ENCODE measurements at regions of chr9 and their contacts with region 1.

Region 1: DNA sequence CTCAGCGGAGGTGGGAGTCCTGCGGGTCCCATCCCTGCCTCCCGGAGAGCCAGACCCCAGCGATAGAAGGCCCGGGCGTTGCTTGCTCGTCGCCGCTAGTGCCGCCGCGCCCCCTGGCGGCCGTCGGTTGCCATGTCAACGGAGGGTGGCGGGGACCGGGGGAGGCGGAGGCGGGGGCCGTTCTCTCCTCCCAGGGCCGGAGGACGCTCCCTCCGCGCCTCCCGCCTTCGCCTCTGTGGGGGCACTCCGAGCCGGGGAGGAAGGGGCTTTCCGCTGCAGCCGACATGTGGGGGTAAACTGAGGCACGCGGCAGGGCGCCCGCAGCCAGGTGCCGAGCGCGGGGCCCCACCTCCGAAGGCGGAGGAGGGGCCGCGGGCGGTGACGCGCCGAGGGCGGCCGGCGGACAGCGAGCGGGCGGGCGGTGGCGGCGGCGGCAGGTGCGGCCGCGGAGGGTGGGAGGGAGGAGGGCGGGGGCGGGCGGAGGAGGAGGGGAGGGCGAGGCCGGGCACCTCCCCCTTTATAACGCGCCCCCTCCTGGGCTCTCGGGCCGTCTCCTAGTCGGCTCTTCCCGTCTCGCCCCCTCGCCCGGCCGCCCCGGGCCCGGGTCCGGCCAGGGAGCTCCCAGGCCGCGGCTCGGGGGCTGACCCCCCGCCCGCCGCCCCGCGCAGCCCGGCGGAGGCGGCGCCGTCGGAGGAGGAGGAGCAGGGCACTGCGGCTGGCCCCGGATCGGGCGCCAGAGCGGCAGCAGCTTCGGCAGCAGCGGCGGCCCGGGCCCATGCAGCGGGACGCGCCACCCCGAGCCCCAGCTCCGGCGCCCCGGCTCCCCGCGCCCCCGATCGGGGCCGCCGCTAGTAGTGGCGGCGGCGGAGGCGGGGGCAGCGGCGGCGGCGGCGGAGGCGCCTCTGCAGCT is 556 bp upstream of the CDK9 start:
- DNase-seq: no peak
- H3K4me3 ChIP-seq: peak overlapping the region; percentile 88
- CTCF ChIP-seq: peak; percentile 87

Region 2: DNA sequence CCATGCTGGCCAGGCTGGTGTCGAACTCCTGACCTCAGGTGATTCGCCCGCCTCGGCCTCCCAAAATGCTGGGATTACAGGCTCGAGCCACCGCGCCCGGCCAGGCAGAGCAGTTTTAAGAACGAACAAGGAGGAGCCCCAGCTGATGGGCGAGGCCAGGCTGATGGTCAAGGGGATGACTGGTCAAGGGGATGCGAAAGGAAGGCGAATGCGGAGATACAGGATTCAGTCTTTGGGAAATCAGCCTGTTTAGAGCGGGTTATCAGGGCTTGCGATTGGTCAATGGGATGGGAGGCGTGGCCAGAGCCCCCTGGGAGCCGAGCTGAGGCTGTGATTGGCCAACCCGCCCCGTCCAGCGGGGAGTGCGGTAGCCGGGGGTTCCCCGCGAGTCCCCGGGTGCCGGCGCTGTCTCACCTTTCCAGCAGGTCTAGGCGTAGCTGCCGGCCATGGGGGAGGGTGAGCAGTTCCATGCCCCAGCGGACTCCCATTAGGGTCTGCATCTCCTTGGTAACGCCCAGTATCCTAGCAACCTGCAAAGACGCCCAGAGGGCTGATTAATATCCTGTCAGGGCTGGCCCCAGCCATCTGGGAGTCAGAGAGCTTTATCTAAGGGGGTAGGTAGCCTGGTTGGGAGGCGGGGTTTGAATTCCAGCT is 42.7 kb before region 1 on chr9:
- CTCF ChIA-PET with region 1: interaction called, 12 read pairs
- POLR2A ChIA-PET with region 1: no interaction called
- DNase-seq: no peak
- H3K4me3 ChIP-seq: peak overlapping the region; percentile 51
- CTCF ChIP-seq: no peak

Region 3: DNA sequence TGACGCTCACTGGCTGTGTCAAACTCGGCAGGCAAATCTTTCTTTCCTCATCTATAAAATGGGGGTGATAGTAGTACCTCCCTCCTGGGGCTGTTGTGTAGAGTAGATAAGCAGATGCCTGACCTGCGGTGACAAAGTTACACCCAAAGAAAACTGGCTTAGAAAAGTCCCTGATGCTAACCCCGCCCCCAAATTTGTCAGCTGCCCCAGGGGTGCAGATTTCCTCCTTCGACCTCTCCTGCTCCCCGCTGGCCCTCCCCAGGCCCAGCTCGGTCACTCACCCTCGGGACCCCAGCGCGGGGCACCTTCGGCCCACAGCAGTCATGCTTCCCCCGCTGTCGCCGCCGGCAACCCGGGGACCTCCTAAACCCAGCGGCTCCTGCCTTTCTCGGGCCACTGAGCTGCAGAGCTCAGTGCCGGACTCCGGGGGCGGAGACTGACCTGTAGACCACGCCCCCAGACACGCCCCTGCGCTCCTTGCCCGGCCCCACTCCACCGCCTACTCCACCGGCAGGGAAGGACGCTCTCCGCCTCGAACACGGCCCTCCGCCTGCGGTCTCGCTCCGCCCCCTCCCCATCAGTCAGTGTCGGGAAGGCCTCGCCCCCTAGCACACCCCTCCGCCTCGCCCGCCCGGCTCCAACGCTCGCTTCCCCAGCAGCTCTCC is 14.2 kb before region 1 on chr9:
- CTCF ChIA-PET with region 1: interaction called, 93 read pairs
- POLR2A ChIA-PET with region 1: interaction called, 4 read pairs
- DNase-seq: peak; percentile 50
- H3K4me3 ChIP-seq: peak overlapping the region; percentile 59
- CTCF ChIP-seq: no peak

Region 4: DNA sequence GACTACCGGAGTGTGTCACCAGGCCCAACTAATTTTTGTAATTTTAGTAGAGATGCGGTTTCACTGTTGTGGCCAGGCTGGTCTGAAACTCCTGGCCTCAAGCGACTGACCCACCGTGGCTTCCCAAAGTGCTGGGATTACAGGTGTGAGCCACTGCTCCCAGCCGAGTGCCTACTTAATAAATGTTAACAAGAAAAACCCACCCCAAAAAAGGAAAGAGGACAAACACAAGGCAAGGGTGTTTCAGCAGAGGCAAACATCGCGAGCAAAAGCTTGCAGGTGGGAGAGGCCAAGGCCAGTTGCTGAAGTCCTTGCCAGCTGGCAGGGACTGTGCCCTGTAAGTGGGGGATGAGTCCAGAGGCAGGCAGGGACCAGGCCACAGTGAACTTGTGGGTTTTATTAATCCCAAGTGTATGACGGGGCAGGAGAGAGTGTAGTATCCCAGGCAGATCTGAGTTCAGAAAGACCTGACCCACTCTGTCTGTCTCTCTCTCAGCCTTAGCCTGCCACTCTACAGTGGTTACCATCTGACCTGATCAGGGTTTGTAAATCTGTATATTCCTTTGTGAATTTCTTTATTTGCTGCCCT is 11.0 kb after region 1 on chr9:
- CTCF ChIA-PET with region 1: interaction called, 15 read pairs
- POLR2A ChIA-PET with region 1: interaction called, 9 read pairs
- DNase-seq: no peak
- H3K4me3 ChIP-seq: no peak overlapping the region
- CTCF ChIP-seq: no peak

Region 5: DNA sequence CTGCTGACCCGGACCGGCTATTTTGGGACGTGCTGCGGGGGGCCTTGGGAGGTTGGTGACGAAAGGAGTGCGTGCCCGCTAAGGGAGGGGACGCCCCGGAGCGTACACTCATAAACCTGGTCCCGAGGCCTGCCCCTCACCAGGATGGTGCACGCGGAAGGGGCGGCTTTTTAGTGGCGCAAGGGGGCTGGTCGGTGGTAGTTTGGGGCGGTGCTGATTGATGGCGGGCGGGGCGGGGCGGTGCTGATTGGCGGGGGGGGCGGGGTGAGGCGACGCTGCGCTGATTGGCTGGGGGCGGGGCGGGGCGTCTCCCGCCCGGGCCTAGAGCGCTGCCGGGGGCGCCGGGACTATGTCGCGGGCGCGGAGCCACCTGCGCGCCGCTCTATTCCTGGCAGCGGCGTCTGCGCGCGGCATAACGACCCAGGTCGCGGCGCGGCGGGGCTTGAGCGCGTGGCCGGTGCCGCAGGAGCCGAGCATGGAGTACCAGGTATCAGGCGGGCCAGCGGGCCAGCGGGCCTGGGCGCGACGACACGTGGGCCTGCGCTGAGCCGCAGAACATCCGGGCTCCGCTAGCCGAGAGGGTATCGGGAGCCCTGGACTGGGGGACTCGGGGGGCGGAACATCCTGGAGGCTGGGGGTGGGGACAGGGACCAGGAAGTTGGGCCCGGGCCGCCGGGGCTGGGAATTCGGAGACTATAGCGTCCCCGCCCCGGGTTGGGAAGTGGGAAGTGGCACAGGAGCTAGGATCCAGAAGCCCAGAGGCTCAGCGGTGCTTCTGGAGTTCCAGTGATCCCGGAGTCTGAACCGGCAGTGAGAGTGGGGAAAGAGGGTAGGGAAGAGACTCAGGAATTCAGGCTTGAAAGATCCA is 17.5 kb after region 1 on chr9 and contains the start of gene FPGS:
- CTCF ChIA-PET with region 1: interaction called, 15 read pairs
- POLR2A ChIA-PET with region 1: interaction called, 9 read pairs
- DNase-seq: peak; percentile 36
- H3K4me3 ChIP-seq: peak within 1 kb of the TSS; percentile 81
- CTCF ChIP-seq: no peak

Measured in AG04449 (cell line).